Naive thymus-derived CD4-positive, alpha-beta T cell (primary cell): ENCODE measurements at regions of chr16 and their contacts with region 1.

Region 1: DNA sequence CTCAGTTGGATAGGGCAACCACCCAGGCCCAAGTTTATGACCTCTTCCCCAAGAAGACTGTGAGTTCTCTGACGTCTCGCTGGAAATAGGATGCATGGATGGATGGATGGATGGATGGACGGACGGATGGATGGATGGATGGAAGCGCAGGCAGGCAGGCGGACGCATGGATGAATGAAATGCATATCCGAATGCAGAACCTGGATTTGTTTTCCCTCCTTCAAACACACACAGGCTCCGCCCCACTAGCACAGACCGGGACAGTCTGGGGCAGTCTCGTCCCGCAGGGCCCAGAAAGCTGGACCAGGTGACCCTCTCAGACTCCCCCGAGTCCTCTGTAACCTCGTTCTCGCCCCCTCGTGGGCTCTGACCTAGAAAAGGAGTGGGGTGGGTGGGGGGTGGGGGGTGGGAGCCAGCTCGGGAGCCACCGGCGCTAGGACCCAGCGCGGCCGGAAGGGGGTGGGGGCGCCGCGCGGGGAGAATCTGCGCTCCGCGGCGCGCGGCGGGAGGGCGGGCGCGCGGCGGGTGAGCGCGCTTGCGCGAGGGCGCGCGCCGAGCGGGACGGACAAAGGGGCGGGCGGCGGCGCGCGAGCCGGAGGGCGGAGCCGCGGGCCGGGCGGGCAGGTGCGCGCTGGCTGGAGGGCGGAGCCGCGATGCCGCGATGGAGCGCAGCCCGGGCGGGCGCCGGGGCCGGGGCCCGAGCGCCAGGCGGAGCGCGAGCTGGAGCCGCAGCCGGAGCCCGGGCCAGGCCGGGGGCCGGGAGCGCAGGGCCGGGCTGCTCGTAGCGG is at the start of gene SBK1:
- DNase-seq: peak; percentile 75 to 90 (median 87)
- ATAC-seq: peak; percentile 97
- H3K4me3 ChIP-seq: peak within 1 kb of the TSS; percentile 94
- H3K4me3 Mint-ChIP-seq: peak within 1 kb of the TSS; percentile 93 to 97 (median 96)
- H3K27ac ChIP-seq: peak within 1 kb of the TSS; percentile 87
- H3K27ac Mint-ChIP-seq: peak within 1 kb of the TSS; percentile 78 to 96 (median 88)
- H3K4me1 ChIP-seq: peaks cover 49 to 59% of the 10 kb centered on the region in 2 donors
- H3K4me1 Mint-ChIP-seq: peaks cover 49 to 76% (median 69%) of the 10 kb centered on the region in 7 donors
- H3K27me3 ChIP-seq: no peaks in the 10 kb centered on the region
- H3K27me3 Mint-ChIP-seq: peaks cover 0 to 27% (median 0%) of the 10 kb centered on the region in 5 donors
- total RNA-seq, gene SBK1: 6.0 to 19.9 (median 17.9) TPM

Region 2: DNA sequence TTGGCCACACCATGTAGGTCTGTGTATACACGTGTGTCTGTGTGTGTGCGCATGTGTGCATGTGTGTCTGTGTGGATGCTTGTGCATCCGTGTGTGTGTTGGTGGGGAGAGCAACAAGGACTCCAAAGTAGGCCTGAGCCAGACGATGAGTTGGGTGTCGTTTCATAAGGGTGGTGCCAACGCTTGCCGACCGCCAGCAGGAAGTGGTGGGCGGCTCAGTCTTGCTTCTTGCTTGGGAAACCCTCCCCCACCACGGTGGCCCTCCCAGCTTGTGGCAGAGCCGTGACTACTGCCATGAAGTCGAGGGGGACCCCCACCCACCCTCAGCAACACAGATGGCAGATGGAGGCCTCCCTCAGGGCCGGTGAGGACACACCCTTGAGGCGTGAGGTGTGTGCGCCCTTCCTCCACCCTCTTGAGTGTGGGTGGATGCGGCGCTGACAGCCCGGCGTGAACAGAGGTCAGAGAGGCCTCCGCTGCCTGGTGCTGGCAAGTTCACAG is 17.8 kb after region 1 on chr16:
- CTCF ChIA-PET with region 1: interaction called, 8 read pairs
- POLR2A ChIA-PET with region 1: interaction called, 205 read pairs
- intact Hi-C with region 1: loop called in 1 of 2 experiments (anchors 1 kb)
- DNase-seq: peak; percentile 62 to 91 (median 88)
- ATAC-seq: peak; percentile 94
- H3K4me3 ChIP-seq: peak overlapping the region; percentile 59
- H3K4me3 Mint-ChIP-seq: peak overlapping the region; percentile 66 to 87 (median 76)
- H3K27ac ChIP-seq: peak overlapping the region; percentile 77
- H3K27ac Mint-ChIP-seq: peak overlapping the region; percentile 81 to 99 (median 97)
- H3K4me1 ChIP-seq: peaks cover 44 to 49% of the 10 kb centered on the region in 2 donors
- H3K4me1 Mint-ChIP-seq: peaks cover 29 to 91% (median 73%) of the 10 kb centered on the region in 7 donors
- H3K27me3 ChIP-seq: no peaks in the 10 kb centered on the region
- H3K27me3 Mint-ChIP-seq: no peaks in the 10 kb centered on the region

Region 3: DNA sequence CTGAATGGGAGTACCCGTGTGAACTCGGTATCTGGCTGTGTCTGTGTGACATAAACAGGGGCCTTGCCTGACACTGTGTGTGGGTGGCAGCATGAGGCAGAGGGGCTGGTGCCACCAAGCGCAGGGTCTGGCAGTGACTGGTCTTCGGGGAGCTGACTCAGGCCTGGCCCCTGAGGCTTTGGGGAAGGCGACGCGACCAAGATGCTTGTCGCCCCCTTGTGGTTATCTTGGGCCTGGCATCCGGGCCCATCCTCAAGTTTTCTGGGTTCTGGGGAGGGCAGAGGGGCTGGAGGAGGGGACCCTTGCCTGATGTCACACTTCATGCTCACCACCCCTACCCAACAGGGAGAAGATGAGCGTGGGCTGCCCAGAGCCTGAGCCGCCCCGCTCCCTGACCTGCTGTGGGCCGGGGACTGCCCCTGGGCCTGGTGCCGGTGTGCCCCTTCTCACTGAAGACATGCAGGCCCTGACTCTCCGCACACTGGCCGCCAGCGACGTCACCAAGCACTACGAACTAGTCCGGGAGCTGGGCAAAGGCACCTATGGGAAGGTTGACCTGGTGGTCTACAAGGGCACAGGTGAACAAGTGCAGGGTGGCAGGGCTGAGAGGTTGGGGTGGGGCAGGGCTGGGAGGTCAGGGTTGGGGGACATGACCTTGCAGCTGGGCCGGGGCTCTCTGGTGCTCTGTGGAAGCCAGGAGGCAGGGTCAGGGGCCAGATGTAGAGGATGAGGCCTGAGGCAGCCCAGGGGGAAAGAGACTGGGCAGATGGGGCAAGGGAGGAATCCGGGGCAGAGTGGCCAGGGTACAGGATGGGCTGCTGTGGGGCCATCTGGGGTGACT is 25.2 kb after region 1 on chr16:
- CTCF ChIA-PET with region 1: interaction called, 12 read pairs
- POLR2A ChIA-PET with region 1: interaction called, 205 read pairs
- intact Hi-C with region 1: no loop called
- DNase-seq: peak; percentile 45 to 82 (median 64)
- ATAC-seq: peak; percentile 84
- H3K4me3 ChIP-seq: no peak overlapping the region
- H3K4me3 Mint-ChIP-seq: peak overlapping the region in 7 of 10 donors; percentile 13 to 63 (median 38)
- H3K27ac ChIP-seq: peak overlapping the region; percentile 38
- H3K27ac Mint-ChIP-seq: peak overlapping the region; percentile 33 to 90 (median 82)
- H3K4me1 ChIP-seq: peaks cover 25 to 30% of the 10 kb centered on the region in 2 donors
- H3K4me1 Mint-ChIP-seq: peaks cover 8 to 49% (median 28%) of the 10 kb centered on the region in 7 donors
- H3K27me3 ChIP-seq: no peaks in the 10 kb centered on the region
- H3K27me3 Mint-ChIP-seq: no peaks in the 10 kb centered on the region

Region 4: DNA sequence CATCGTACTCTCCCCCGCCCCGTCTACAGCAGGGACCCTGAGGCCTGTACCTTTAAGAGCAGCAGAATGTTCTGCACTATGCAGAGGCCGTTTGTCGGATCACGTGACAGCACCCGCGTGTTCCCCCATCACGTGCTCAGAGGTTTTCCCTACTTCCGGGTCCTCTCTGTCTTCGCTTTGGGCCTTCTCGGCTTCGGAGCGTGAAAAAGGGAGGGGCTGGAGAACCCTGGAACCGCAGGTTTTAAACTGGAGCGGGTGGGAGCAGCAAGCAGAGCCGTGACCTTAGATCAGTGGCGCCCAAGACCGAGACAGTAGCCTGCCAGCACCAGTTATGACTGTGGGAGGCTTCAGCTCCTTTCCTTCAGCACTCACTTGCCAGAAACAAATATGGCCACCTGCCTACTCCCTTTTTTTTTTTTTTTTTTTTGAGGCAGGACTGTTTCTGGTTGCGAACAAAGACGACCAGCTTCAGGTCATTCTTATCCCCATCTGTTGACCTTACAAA is 200.0 kb after region 1 on chr16 and contains the start of gene CLN3:
- CTCF ChIA-PET with region 1: no interaction called
- POLR2A ChIA-PET with region 1: interaction called, 4 read pairs
- intact Hi-C with region 1: loop called in 1 of 2 experiments (anchors 1 kb)
- DNase-seq: peak; percentile 73 to 95 (median 93)
- ATAC-seq: peak; percentile 78
- H3K4me3 ChIP-seq: peak within 1 kb of the TSS; percentile 98
- H3K4me3 Mint-ChIP-seq: peak within 1 kb of the TSS; percentile 95 to 100 (median 98)
- H3K27ac ChIP-seq: peak within 1 kb of the TSS; percentile 95
- H3K27ac Mint-ChIP-seq: peak within 1 kb of the TSS; percentile 99 to 100 (median 100)
- H3K4me1 ChIP-seq: peaks cover 31 to 40% of the 10 kb centered on the region in 2 donors
- H3K4me1 Mint-ChIP-seq: peaks cover 41 to 77% (median 62%) of the 10 kb centered on the region in 7 donors
- H3K27me3 ChIP-seq: no peaks in the 10 kb centered on the region
- H3K27me3 Mint-ChIP-seq: no peaks in the 10 kb centered on the region
- total RNA-seq, gene CLN3: 56.5 to 76.3 (median 70.7) TPM